ENCODE measurements at regions of chr16 and their contacts with region 1.

Region 1: GRCh38 chr16:10964039-10964890 is 19.9 kb downstream of the CLEC16A start:
- H3K4me3 Mint-ChIP-seq: no peak overlapping the region
- H3K27ac Mint-ChIP-seq: peak overlapping the region; percentile 73
- H3K4me1 Mint-ChIP-seq: peaks cover 53% of the 10 kb centered on the region
- H3K27me3 Mint-ChIP-seq: no peaks in the 10 kb centered on the region

Region 2: GRCh38 chr16:11721781-11722467 is 757.7 kb after region 1 on chr16:
- intact Hi-C with region 1: loop called (anchors 5 kb)
- H3K4me3 Mint-ChIP-seq: no peak overlapping the region
- H3K27ac Mint-ChIP-seq: no peak overlapping the region
- H3K4me1 Mint-ChIP-seq: peaks cover 11% of the 10 kb centered on the region
- H3K27me3 Mint-ChIP-seq: no peaks in the 10 kb centered on the region

Measured in dendritic cell treated with granulocyte-macrophage colony-stimulating factor and Interleukin-4, amounts not matched to agents 40 ng/mL and 50 ng/mL, for 4 days (primary cell).